Aorta (tissue), 5 donors: ENCODE measurements at regions of chr12 and their contacts with region 1.

Region 1: DNA sequence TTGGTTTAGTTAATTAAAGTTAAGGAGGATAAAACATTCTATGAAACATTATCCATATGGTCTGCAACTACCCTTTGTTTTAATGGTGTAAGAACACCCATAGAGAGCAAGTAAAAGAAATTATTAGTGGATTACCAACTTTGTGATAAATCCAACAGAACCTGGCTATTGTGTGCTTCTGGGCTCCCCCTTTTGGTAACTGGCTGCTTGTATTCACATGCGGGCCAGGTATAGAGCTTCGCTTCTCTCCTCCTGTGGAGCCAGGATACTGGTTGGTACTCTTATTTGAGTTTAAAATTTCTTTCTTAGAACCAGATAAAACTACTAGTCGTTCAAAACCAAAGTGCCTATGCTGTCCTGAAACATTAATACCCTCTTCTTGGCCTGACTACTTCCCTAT is 81.0 kb downstream of the PTPRR start:
- DNase-seq: no peak
- ATAC-seq: no peak
- H3K4me3 ChIP-seq: no peak overlapping the region
- H3K27ac ChIP-seq: no peak overlapping the region
- H3K4me1 ChIP-seq: peaks cover 3% of the 10 kb centered on the region in 2 donors
- H3K27me3 ChIP-seq: no peaks in the 10 kb centered on the region

Region 2: DNA sequence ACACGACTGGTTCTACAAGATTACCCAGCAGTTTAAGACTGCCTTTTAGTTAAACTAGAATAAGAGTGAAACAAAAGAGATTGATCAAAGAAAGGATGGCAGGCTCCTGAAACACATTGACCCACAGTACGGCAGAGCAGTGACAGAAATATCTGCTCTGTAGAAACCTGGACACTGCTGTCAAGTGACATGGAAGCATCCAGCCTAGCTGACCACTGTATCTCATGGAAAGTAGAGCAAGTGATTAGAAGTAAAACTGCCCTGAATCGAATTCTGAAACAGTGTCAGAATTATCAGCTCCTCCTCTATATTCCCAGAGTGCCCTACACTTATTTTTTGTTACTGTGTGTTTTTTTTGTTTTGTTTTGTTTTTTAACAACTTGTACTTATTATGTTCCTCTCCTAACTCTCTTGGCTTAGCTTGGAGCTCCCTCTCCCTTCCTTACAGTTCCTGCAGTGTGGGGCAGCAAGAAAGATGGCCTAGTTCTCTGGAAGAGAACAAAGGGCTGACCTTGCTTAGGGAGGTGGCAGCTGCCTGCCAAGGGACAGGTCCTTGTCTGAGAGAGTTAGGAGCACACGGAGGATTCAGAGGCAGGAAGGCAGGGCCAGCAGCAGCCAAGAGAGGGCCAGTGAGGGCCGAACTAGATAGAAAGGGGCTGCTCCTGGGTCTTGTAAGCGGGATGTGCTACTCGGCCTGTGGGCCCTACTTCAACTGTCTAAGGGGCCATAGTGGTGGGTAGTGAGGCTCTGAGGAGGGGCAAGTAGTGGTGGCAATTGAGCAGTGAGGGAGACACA is 16.2 kb before region 1 on chr12:
- intact Hi-C with region 1: loop called in 1 of 2 experiments (anchors 1 kb)
- DNase-seq: no peak
- ATAC-seq: no peak
- H3K4me3 ChIP-seq: no peak overlapping the region
- H3K27ac ChIP-seq: no peak overlapping the region
- H3K4me1 ChIP-seq: no peaks in the 10 kb centered on the region
- H3K27me3 ChIP-seq: no peaks in the 10 kb centered on the region